ENCODE measurements at regions of chr4 and their contacts with region 1.

Region 1: DNA sequence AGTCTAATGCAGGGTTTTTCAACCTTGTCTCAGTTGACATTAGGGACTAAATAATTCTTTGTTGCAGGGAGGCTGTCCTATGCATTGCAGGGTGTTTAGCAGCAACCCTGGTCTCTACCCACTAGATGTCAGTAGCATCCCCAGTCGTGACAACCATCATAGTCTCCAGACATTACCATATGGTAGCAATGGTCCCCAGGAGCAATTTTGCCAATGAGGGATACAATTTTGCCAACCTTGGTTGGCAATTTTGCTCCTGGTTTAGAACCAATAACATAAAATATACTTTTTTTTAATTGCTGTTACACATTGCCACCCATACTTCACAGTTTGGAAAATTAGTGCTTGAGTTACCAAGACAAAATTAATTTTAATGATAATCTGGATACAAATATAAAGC is 6.0 kb downstream of the EREG start:
- DNase-seq: no peak
- H3K4me3 ChIP-seq: no peak overlapping the region
- H3K27ac ChIP-seq: no peak overlapping the region
- H3K27me3 ChIP-seq: peaks cover 0 to 33% (median 7%) of the 10 kb centered on the region in 45 donors
- CTCF ChIP-seq: peak in 48 of 56 donors; percentile 20 to 59 (median 43)

Region 2: GRCh38 chr4:74675673-74676279 is 304.9 kb after region 1 on chr4:
- intact Hi-C with region 1: loop called in 1 of 2 experiments (anchors 10 kb)
- DNase-seq: no peak
- H3K4me3 ChIP-seq: no peak overlapping the region
- H3K27ac ChIP-seq: no peak overlapping the region
- H3K27me3 ChIP-seq: peaks cover 0 to 8% (median 0%) of the 10 kb centered on the region in 45 donors
- CTCF ChIP-seq: peak in 55 of 56 donors; percentile 31 to 67 (median 53)